Activated CD8-positive, alpha-beta memory T cell treated with anti-CD3 and anti-CD28 coated beads, Interleukin-2, amount 10 ng/mL, durations not matched to agents 7 days and 5 days (primary cell): ENCODE measurements at regions of chr19 and their contacts with region 1.

Region 1: GRCh38 chr19:42450314-42450934 is 7.7 kb upstream of the CXCL17 start:
- DNase-seq: peak; percentile 90
- ATAC-seq: peak; percentile 99
- H3K4me3 Mint-ChIP-seq: no peak overlapping the region
- H3K27ac Mint-ChIP-seq: no peak overlapping the region
- H3K4me1 Mint-ChIP-seq: peaks cover 38% of the 10 kb centered on the region
- H3K27me3 Mint-ChIP-seq: peaks cover 2% of the 10 kb centered on the region

Region 2: GRCh38 chr19:42433503-42434260 is 16.7 kb before region 1 on chr19:
- CTCF ChIA-PET with region 1: interaction called, 41 read pairs
- DNase-seq: peak; percentile 79
- ATAC-seq: peak; percentile 75
- H3K4me3 Mint-ChIP-seq: no peak overlapping the region
- H3K27ac Mint-ChIP-seq: no peak overlapping the region
- H3K4me1 Mint-ChIP-seq: peaks cover 12% of the 10 kb centered on the region
- H3K27me3 Mint-ChIP-seq: peaks cover 5% of the 10 kb centered on the region

Region 3: GRCh38 chr19:42497492-42498168 is 47.2 kb after region 1 on chr19:
- CTCF ChIA-PET with region 1: interaction called, 10 read pairs
- DNase-seq: no peak
- ATAC-seq: no peak
- H3K4me3 Mint-ChIP-seq: no peak overlapping the region
- H3K27ac Mint-ChIP-seq: peak overlapping the region; percentile 39
- H3K4me1 Mint-ChIP-seq: peaks cover 57% of the 10 kb centered on the region
- H3K27me3 Mint-ChIP-seq: no peaks in the 10 kb centered on the region

Region 4: GRCh38 chr19:42529248-42529764 is 78.9 kb after region 1 on chr19:
- CTCF ChIA-PET with region 1: interaction called, 186 read pairs
- DNase-seq: peak; percentile 83
- ATAC-seq: peak; percentile 81
- H3K4me3 Mint-ChIP-seq: peak overlapping the region; percentile 76
- H3K27ac Mint-ChIP-seq: peak overlapping the region; percentile 89
- H3K4me1 Mint-ChIP-seq: peaks cover 48% of the 10 kb centered on the region
- H3K27me3 Mint-ChIP-seq: peaks cover 4% of the 10 kb centered on the region

Region 5: GRCh38 chr19:42596391-42597072 is 146.1 kb after region 1 on chr19:
- CTCF ChIA-PET with region 1: interaction called, 15 read pairs
- DNase-seq: no peak
- ATAC-seq: peak; percentile 65
- H3K4me3 Mint-ChIP-seq: no peak overlapping the region
- H3K27ac Mint-ChIP-seq: no peak overlapping the region
- H3K4me1 Mint-ChIP-seq: no peaks in the 10 kb centered on the region
- H3K27me3 Mint-ChIP-seq: peaks cover 31% of the 10 kb centered on the region